ENCODE measurements at regions of chr1 and their contacts with region 1.

Region 1: DNA sequence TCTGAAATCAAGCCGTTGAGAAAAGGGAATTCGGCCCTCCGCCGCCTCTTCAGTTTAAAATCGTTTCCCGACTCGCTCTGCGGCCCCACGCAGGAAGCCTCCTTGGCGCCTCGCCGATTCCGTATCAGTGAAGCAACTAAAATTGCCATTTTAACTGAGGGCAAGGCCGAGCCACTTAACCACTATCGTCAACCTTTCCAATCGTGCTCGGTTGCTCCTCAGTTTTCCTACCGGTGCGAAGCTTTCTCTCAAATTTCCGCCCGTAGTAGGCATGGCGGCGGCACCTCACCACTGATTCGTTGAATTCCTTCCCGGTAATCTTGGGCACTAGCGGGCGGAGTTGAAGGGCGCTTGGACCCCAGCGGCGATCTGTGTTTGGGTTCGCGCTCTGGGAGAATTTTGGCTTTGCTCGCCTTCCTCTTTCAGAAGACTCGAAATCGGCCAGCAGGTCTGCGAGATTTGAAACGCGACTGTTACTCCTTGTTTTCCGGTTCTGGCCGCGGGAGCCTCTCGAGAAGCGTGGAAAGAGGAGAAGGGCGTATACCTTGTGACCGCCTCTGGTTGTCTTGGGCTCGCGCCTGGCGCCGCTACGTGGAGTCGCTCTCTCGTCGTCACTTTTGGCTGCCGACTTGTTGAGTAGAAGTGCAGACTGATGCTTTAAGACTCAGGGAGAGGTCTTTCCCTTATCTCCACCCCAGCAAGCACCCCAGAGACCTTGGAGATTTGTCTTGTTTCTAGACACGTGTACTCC is at the starts of genes CENPL and DARS2:
- DNase-seq: peak; percentile 97 to 98
- ATAC-seq: peak; percentile 98
- H3K4me3 ChIP-seq: peak within 1 kb of the TSS; percentile 76
- H3K27ac ChIP-seq: peak within 1 kb of the TSS; percentile 91
- H3K4me1 ChIP-seq: peaks cover 13% of the 10 kb centered on the region
- H3K27me3 ChIP-seq: no peaks in the 10 kb centered on the region
- CTCF ChIP-seq: no peak
- total RNA-seq, gene CENPL: 2.1 to 6.7 (median 4.4) TPM
- total RNA-seq, gene DARS2: 5.7 to 14.3 (median 6.7) TPM

Region 2: GRCh38 chr1:173420330-173420806 is 404.1 kb before region 1 on chr1:
- intact Hi-C with region 1: loop called in 1 of 2 experiments (anchors 2 kb)
- DNase-seq: peak; percentile 28 to 56
- ATAC-seq: peak; percentile 75 to 96 (median 90)
- H3K4me3 ChIP-seq: no peak overlapping the region
- H3K27ac ChIP-seq: no peak overlapping the region
- H3K4me1 ChIP-seq: no peaks in the 10 kb centered on the region
- H3K27me3 ChIP-seq: no peaks in the 10 kb centered on the region
- CTCF ChIP-seq: peak; percentile 88

Region 3: GRCh38 chr1:173476664-173477285 is 347.7 kb before region 1 on chr1:
- intact Hi-C with region 1: loop called in 1 of 2 experiments (anchors 5 kb)
- DNase-seq: peak; percentile 95 to 97
- ATAC-seq: peak; percentile 82 to 88 (median 86)
- H3K4me3 ChIP-seq: peak overlapping the region; percentile 88
- H3K27ac ChIP-seq: peak overlapping the region; percentile 99
- H3K4me1 ChIP-seq: peaks cover 44% of the 10 kb centered on the region
- H3K27me3 ChIP-seq: no peaks in the 10 kb centered on the region
- CTCF ChIP-seq: no peak

Region 4: DNA sequence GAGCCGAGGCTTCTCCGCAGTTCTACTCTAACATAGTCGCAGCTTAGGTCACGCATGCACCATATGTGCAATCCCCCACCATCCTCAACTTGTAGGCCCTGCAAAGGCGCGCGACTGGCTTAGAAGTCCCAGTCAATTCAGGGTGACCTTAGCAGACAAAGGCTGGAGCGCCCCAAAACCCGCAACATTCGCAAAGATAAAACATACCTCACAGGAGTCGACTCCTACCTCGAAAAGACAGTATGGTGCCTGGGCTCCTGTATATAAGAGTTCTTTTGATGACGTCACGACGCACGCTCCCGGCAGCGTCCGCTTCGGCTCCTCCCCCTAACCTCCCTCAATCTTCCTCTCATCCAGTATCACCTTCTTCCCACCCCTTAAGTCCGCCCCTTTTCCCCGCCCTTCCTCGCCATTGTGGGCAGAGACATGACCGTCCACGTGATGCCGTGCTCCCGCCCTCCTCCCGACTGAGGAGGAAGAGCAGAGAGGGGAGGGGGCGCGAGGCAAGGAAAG is 43.3 kb after region 1 on chr1 and contains the start of gene GAS5:
- intact Hi-C with region 1: loop called in 1 of 2 experiments (anchors 5 kb)
- DNase-seq: peak; percentile 99
- ATAC-seq: peak; percentile 94 to 95 (median 94)
- H3K4me3 ChIP-seq: peak within 1 kb of the TSS; percentile 87
- H3K27ac ChIP-seq: peak within 1 kb of the TSS; percentile 96
- H3K4me1 ChIP-seq: peaks cover 30% of the 10 kb centered on the region
- H3K27me3 ChIP-seq: no peaks in the 10 kb centered on the region
- CTCF ChIP-seq: no peak
- total RNA-seq, gene GAS5: 70.0 to 148 (median 100) TPM

Region 5: DNA sequence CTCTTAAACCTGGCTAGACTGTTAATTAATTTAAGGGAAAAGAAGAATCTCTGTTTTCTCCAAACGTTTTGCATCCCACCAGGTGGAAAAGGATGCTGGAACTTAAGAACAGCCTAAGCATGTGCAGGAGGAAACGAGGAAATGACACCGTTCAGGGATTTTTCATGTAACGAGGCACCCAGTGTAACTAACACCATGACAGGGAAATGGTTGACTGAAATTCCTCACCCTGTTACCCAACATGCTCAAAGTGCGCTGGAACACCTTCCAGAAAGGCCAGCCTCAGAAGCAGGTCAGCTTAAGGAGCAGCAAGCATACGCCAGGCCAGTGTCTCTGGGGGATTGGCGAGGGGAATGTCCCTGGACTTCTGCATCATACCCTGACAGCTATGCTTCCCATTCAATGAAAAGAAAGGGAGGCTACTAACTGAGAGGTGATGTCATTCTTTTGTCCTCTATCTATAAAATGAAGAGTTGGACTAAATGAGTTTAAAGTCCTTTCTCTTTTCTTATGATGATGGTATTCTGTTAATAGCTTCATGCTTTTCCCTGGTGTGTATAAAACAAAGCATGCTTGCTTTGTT is 1264.7 kb after region 1 on chr1:
- intact Hi-C with region 1: no loop called
- DNase-seq: peak in 1 of 2 donors; percentile 63
- ATAC-seq: no peak
- H3K4me3 ChIP-seq: no peak overlapping the region
- H3K27ac ChIP-seq: no peak overlapping the region
- H3K4me1 ChIP-seq: no peaks in the 10 kb centered on the region
- H3K27me3 ChIP-seq: no peaks in the 10 kb centered on the region
- CTCF ChIP-seq: no peak

Measured in psoas muscle (tissue), 8 donors.